PC-3 (cell line): ENCODE measurements at regions of chr12 and their contacts with region 1.

Region 1: DNA sequence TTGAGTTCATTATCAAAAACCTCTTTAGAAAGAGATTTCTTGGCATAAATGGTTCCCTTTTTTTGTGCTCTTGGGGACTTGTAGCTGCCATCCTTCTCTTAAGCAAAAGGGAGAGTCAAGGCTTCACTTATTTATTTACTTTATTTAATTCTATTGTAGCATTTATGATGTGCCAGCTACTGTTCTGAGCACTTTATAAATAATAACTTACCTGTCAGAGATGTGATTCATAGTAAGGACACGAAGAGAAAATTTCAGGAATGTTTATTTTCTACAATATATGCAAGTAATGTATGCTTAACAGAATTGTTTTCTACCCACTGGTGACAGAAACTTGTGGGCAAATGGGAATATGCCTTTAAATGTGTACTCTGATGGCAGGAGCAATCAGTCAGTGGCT is 33.3 kb downstream of the TMEM117 start:
- DNase-seq: peak; percentile 42
- ATAC-seq: peak; percentile 77
- H3K4me3 ChIP-seq: no peak overlapping the region
- H3K27ac ChIP-seq: no peak overlapping the region
- H3K4me1 ChIP-seq: peaks cover 10% of the 10 kb centered on the region
- H3K27me3 ChIP-seq: no peaks in the 10 kb centered on the region
- CTCF ChIP-seq: no peak

Region 2: DNA sequence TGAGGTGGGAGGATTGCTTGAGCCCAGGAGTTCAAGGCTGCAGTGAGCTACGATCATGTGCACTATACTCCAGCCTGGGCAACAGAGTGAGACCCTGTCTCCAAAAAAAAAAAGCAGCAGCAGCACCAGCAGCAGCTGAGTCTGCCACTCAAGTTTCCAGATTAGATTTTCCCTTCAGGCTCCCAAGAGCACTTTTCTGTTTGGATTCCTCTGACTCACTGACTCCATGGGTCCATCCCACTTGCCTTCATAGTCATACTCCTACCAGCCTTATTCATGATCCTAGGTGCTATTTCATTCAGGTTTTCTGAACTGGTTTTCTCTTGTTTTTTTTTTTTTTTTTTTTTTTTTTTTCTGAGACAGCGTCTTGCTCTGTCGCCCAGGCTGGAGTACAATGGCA is 56.3 kb before region 1 on chr12:
- CTCF ChIA-PET with region 1: no interaction called
- POLR2A ChIA-PET with region 1: no interaction called
- intact Hi-C with region 1: loop called (anchors 5 kb)
- DNase-seq: peak; percentile 78
- ATAC-seq: peak; percentile 84
- H3K4me3 ChIP-seq: no peak overlapping the region
- H3K27ac ChIP-seq: no peak overlapping the region
- H3K4me1 ChIP-seq: peaks cover 7% of the 10 kb centered on the region; the same call in 1 of the 2 replicates
- H3K27me3 ChIP-seq: no peaks in the 10 kb centered on the region
- CTCF ChIP-seq: no peak

Region 3: DNA sequence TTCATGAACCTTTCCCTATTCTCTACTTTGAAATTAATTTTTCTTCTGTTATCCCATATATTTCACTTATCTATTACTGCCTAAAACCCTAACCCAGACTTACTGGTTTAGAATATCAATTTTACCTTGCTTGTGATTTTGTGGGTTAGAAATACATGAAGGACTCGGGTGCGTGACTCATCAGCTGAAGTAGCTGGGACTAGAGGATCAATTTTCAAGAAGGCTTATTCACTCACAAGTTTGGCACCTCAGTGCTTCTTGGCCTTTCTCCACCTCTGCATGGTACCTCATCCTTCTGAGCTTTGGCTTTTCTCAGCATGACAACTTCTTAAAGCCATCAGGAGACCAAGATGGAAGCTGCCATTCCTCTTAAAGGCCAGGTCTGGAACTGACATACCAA is 24.5 kb after region 1 on chr12:
- CTCF ChIA-PET with region 1: no interaction called
- POLR2A ChIA-PET with region 1: no interaction called
- intact Hi-C with region 1: no loop called
- DNase-seq: peak; percentile 62
- ATAC-seq: no peak; the same call in 1 of the 2 replicates
- H3K4me3 ChIP-seq: no peak overlapping the region
- H3K27ac ChIP-seq: no peak overlapping the region
- H3K4me1 ChIP-seq: peaks cover 20% of the 10 kb centered on the region
- H3K27me3 ChIP-seq: no peaks in the 10 kb centered on the region
- CTCF ChIP-seq: no peak